Activated naive CD4-positive, alpha-beta T cell treated with anti-CD3 and anti-CD28 coated beads, Interleukin-2, amount 10 ng/mL, durations not matched to agents 7 days and 5 days (primary cell): ENCODE measurements at regions of chr2 and their contacts with region 1.

Region 1: GRCh38 chr2:231900486-231900942 is 25.7 kb downstream of the NPPC start:
- DNase-seq: peak; percentile 71
- H3K4me3 Mint-ChIP-seq: no peak overlapping the region
- H3K27ac Mint-ChIP-seq: no peak overlapping the region
- H3K4me1 Mint-ChIP-seq: no peaks in the 10 kb centered on the region
- H3K27me3 Mint-ChIP-seq: peaks cover 33% of the 10 kb centered on the region

Region 2: GRCh38 chr2:231300020-231300721 is 600.3 kb before region 1 on chr2:
- CTCF ChIA-PET with region 1: no interaction called
- DNase-seq: no peak
- H3K4me3 Mint-ChIP-seq: no peak overlapping the region
- H3K27ac Mint-ChIP-seq: no peak overlapping the region
- H3K4me1 Mint-ChIP-seq: peaks cover 5% of the 10 kb centered on the region
- H3K27me3 Mint-ChIP-seq: peaks cover 3% of the 10 kb centered on the region

Region 3: GRCh38 chr2:231910771-231911170 is 10.3 kb after region 1 on chr2:
- CTCF ChIA-PET with region 1: interaction called, 10 read pairs
- DNase-seq: no peak
- H3K4me3 Mint-ChIP-seq: no peak overlapping the region
- H3K27ac Mint-ChIP-seq: no peak overlapping the region
- H3K4me1 Mint-ChIP-seq: peaks cover 19% of the 10 kb centered on the region
- H3K27me3 Mint-ChIP-seq: peaks cover 26% of the 10 kb centered on the region

Region 4: GRCh38 chr2:232142049-232142448 is 241.5 kb after region 1 on chr2:
- CTCF ChIA-PET with region 1: interaction called, 21 read pairs
- DNase-seq: peak; percentile 49
- H3K4me3 Mint-ChIP-seq: no peak overlapping the region
- H3K27ac Mint-ChIP-seq: no peak overlapping the region
- H3K4me1 Mint-ChIP-seq: peaks cover 27% of the 10 kb centered on the region
- H3K27me3 Mint-ChIP-seq: no peaks in the 10 kb centered on the region

Region 5: GRCh38 chr2:232438951-232439757 is 538.6 kb after region 1 on chr2:
- CTCF ChIA-PET with region 1: interaction called, 12 read pairs
- DNase-seq: peak; percentile 60
- H3K4me3 Mint-ChIP-seq: no peak overlapping the region
- H3K27ac Mint-ChIP-seq: no peak overlapping the region
- H3K4me1 Mint-ChIP-seq: no peaks in the 10 kb centered on the region
- H3K27me3 Mint-ChIP-seq: peaks cover 21% of the 10 kb centered on the region